ENCODE measurements at regions of chr9 and their contacts with region 1.

Region 1: GRCh38 chr9:130741831-130742449 is 48.4 kb downstream of the EXOSC2 start:
- DNase-seq: no peak
- H3K4me3 ChIP-seq: no peak overlapping the region
- H3K27ac ChIP-seq: no peak overlapping the region
- H3K27me3 ChIP-seq: no peaks in the 10 kb centered on the region
- CTCF ChIP-seq: no peak

Region 2: DNA sequence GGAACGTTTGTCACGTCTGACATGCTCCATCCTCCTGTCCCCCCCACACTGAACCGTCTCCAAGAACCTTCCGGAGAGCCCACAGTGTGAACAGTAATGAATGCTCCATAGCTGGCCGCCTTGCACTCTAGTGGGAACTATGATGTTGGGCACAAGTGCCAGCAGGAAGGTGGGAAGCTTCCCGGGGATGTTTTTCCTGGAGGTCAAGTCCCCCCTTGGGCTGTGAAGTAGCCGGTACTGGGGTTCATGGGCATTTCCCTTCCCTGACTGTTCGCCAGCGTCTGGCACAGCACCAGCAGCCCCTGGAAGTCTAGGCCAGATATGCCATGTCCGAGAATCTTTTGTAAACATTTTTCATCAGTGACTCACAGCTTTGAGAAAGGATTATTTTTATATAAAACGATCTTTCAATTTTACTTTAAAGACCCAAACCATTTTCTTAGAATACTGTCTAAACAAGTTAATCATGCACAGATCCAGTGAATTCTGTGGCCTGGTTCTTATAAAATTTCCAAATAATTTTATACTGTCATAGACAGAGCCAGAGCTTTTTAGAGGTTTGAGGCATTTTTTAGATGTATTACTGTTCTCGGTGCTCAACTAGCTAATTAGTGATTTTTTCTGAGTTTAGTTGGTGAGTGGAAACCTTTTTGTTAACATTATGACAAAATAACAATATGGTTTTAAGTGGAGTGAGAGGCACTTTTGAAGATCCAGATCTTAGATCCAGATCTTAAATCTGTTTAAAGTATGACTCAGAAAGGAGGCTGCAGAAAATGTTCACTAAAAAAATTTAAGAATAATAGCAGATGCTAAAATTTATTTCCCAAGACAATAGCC is 104.8 kb after region 1 on chr9:
- CTCF ChIA-PET with region 1: no interaction called
- POLR2A ChIA-PET with region 1: interaction called, 10 read pairs
- DNase-seq: no peak
- H3K4me3 ChIP-seq: peak overlapping the region; percentile 46
- H3K27ac ChIP-seq: peak overlapping the region; percentile 98
- H3K27me3 ChIP-seq: no peaks in the 10 kb centered on the region
- CTCF ChIP-seq: no peak

Region 3: GRCh38 chr9:130893341-130894101 is 151.6 kb after region 1 on chr9:
- CTCF ChIA-PET with region 1: no interaction called
- POLR2A ChIA-PET with region 1: interaction called, 10 read pairs
- DNase-seq: no peak
- H3K4me3 ChIP-seq: no peak overlapping the region
- H3K27ac ChIP-seq: peak overlapping the region; percentile 31
- H3K27me3 ChIP-seq: no peaks in the 10 kb centered on the region
- CTCF ChIP-seq: peak; percentile 38